Left cardiac atrium (tissue), 4 donors: ENCODE measurements at regions of chr10 and their contacts with region 1.

Region 1: DNA sequence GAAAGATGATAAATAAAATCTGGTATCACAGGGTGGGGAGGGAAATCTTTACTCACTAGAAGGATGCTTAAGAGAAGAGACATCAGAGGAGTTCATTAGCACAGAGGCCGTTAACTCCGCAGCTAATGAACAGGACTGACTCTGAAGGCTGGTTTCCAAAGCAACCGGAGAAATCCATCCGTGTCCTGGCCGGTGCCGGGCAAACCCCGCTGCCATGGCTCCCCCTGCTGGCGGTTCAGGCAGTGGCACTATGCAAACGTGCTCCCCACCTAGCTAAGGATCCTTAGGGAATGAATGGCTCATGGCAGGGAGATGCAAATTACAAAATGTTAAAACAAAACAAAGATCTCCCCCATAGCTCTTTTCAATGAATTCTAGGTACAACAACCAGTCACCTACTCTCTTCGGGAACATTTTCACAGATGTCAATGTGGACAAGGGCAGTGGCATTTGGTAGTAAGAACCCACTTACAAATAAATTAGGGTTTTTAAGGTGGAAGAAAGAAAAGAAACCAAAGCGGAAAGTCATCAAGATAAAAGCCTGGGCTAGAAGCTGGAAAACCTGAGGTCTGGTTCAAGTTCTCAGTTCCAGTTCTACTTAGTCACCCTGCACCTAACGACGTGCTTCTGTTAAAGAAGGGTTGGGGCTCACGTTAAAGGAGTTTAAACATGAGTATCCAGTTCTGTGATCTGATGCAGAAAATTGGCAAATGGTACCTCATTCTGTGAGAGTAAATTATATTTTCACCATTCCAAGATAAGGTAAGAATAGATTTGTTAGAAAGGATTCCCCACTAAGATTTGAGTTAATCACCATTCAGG is 138.2 kb downstream of the SVIL start:
- DNase-seq: peak; percentile 78
- ATAC-seq: peak; percentile 74 to 79

Region 2: DNA sequence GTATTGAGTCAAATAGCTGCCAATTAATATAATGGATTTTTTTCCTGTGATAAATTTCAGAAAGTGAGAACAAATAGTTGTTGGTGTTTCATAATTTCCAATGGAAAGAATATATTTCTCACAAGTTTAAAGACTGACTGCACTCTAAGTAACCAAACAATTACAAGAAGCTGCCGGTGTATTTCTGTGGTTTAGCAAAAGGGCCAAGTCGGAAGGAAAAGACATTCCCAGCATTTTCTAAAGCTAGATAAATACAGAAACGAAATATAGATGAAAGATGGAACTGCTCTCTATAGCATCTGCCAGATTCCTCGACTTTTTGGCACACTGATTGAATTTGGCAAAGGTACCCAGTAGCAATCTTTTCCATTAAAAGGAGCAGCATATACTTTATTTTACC is 1658.2 kb before region 1 on chr10:
- intact Hi-C with region 1: no loop called
- DNase-seq: no peak
- ATAC-seq: no peak

Region 3: GRCh38 chr10:29377333-29377961 is 119.1 kb before region 1 on chr10:
- intact Hi-C with region 1: loop called in 1 of 2 experiments (anchors 5 kb)
- DNase-seq: no peak
- ATAC-seq: no peak

Region 4: DNA sequence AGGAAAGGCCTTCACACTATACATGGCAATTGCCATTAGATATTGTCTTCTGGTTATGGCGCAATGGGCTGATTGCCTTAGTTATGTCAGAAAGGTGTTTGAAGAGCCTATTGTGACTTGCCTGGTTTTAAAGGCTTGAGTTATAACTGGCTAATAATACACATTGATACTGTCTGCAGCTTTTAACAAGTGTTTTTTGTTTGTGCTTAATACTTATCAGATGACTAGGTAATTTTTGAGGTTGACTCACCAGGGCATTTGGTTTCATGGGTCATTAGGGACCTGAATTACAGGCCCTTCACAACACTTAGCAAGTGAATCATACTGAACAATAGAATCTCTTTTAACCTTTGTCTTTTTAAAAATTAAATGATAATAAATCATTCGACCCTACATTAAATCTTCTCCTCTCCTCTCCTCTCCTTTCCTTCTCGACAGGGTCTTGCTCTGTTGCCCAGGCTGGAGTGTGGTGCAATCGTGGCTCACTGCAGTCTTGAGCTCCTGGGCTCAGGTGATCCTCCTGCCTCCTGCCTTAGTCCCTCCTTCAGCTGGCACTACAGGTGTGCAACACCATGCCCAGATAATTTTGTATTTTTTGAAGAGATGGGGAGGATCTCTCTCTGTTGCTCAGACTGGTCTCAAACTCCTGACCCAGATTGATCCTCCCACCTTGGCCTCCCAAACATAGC is 366.5 kb after region 1 on chr10:
- intact Hi-C with region 1: no loop called
- DNase-seq: no peak
- ATAC-seq: peak in 1 of 2 donors; percentile 24